ENCODE measurements at regions of chr18 and their contacts with region 1.

Region 1: DNA sequence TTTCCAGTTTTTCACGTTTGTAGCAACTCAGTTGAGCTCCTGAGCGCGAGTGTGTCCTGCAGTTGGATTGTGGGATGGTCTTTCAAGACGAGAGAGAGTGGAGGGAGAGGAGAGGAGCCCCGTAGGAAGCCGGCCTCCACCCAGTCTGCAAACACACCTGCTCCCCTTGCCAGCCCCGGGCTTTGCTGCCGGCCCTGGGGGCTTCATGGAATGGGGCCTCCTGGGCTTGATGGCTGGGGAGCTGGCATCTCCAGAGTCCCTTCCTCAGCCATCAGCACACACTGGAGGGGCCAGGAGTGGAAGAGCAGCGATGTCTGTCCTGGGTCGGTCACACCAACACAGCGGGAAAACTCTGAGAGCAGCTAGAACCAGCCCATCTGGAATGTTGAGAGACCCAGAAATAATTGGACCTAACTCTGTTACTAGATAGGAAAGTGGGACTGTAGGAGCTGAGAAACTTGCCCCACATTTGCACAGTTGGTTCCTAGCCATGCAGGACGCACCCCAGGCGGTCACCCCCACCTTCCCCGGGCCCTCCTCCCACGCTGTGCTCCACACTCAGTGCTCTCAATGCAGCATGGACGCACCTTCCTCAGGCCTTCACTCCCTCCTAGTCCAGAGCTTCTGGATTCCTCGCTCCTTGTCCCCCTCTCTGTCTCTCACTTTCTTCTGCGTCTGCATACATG is 69.6 kb downstream of the PTGR3 start:
- DNase-seq: no peak
- ATAC-seq: no peak
- H3K4me3 ChIP-seq: no peak overlapping the region
- H3K4me3 Mint-ChIP-seq: no peak overlapping the region
- H3K27ac ChIP-seq: no peak overlapping the region
- H3K27ac Mint-ChIP-seq: no peak overlapping the region
- H3K4me1 ChIP-seq: no peaks in the 10 kb centered on the region
- H3K4me1 Mint-ChIP-seq: no peaks in the 10 kb centered on the region
- H3K27me3 ChIP-seq: no peaks in the 10 kb centered on the region
- H3K27me3 Mint-ChIP-seq: no peaks in the 10 kb centered on the region
- CTCF ChIP-seq: no peak

Region 2: DNA sequence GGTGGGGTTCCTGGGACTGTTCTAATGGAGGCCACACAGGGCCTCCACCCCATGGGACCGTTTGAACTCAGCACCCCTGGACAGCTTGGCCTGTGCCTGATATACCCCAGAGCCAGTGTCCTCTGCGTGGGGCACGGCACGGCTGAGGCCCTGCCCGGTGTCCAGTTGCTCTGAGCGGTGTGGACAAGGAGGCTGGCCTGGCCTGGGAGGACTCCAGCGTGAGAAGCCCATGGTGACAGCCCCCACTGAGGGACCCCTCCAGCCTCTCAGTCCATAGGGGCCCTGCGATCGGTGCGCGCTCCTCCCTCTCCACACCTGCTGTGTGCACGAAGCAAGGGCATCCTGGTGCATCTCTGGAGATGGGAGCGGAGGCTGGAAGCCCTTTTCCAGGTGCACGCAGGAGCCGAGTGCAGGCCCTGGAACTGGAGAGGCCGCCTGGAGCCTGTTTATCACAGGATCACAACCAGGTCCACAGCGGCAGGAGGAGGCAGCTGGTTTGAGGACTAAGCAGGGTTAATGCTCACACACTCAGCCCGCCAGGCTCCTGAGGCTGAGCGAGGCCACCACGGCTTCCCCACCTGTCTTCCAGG is 50.7 kb before region 1 on chr18:
- CTCF ChIA-PET with region 1: no interaction called
- POLR2A ChIA-PET with region 1: no interaction called
- intact Hi-C with region 1: loop called in 1 of 2 experiments (anchors 5 kb)
- DNase-seq: no peak
- ATAC-seq: no peak
- H3K4me3 ChIP-seq: no peak overlapping the region
- H3K4me3 Mint-ChIP-seq: no peak overlapping the region
- H3K27ac ChIP-seq: no peak overlapping the region
- H3K27ac Mint-ChIP-seq: no peak overlapping the region
- H3K4me1 ChIP-seq: no peaks in the 10 kb centered on the region
- H3K4me1 Mint-ChIP-seq: no peaks in the 10 kb centered on the region
- H3K27me3 ChIP-seq: no peaks in the 10 kb centered on the region
- H3K27me3 Mint-ChIP-seq: no peaks in the 10 kb centered on the region
- CTCF ChIP-seq: no peak

Measured in CD4-positive, alpha-beta T cell (primary cell).